Prostate gland (tissue), 2 donors: ENCODE measurements at regions of chr3 and their contacts with region 1.

Region 1: GRCh38 chr3:178436773-178437172 is 99.5 kb upstream of the KCNMB2 start:
- DNase-seq: no peak
- H3K4me3 ChIP-seq: no peak overlapping the region
- H3K27ac ChIP-seq: no peak overlapping the region
- H3K4me1 ChIP-seq: no peaks in the 10 kb centered on the region
- H3K27me3 ChIP-seq: no peaks in the 10 kb centered on the region
- CTCF ChIP-seq: peak; percentile 26 to 59 (median 50)
- POLR2A ChIP-seq: no peak

Region 2: GRCh38 chr3:178060407-178060806 is 376.4 kb before region 1 on chr3:
- intact Hi-C with region 1: no loop called
- DNase-seq: no peak
- H3K4me3 ChIP-seq: no peak overlapping the region
- H3K27ac ChIP-seq: peak overlapping the region; percentile 12 to 18
- H3K4me1 ChIP-seq: no peaks in the 10 kb centered on the region
- H3K27me3 ChIP-seq: no peaks in the 10 kb centered on the region
- CTCF ChIP-seq: no peak
- POLR2A ChIP-seq: no peak

Region 3: DNA sequence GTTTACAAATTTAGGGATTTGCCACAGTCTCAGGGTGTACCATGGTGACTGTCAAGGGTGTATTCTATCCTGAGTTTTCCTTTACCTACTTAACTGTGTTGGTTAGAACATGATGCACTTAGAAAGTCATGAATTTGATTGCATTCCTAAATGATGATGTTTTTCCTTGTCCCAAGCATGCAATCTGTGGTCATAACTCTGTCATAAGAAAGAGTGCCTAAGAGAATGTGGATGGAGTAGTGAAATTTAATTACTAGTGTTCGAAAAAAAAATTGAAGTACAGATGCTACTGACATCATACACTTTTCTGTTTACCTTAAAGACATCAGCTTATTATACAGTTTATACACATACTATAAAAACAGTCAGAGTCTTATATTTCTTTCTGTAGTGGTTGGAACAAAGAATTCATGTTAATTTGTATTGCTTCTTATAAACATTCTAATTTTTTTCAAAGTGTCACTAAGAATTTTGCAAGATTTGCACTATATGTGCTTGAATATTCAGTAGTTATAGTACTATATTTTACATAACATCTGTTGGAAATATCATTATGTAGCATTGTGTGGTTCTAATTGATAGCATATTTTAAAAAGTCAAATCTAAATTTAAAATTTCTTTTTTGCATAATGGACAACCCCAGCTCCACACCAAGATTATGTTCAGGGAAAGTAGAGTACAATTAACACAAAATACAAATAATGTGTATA is 131.9 kb before region 1 on chr3:
- intact Hi-C with region 1: no loop called
- DNase-seq: no peak
- H3K4me3 ChIP-seq: no peak overlapping the region
- H3K27ac ChIP-seq: no peak overlapping the region
- H3K4me1 ChIP-seq: no peaks in the 10 kb centered on the region
- H3K27me3 ChIP-seq: no peaks in the 10 kb centered on the region
- CTCF ChIP-seq: no peak
- POLR2A ChIP-seq: no peak

Region 4: DNA sequence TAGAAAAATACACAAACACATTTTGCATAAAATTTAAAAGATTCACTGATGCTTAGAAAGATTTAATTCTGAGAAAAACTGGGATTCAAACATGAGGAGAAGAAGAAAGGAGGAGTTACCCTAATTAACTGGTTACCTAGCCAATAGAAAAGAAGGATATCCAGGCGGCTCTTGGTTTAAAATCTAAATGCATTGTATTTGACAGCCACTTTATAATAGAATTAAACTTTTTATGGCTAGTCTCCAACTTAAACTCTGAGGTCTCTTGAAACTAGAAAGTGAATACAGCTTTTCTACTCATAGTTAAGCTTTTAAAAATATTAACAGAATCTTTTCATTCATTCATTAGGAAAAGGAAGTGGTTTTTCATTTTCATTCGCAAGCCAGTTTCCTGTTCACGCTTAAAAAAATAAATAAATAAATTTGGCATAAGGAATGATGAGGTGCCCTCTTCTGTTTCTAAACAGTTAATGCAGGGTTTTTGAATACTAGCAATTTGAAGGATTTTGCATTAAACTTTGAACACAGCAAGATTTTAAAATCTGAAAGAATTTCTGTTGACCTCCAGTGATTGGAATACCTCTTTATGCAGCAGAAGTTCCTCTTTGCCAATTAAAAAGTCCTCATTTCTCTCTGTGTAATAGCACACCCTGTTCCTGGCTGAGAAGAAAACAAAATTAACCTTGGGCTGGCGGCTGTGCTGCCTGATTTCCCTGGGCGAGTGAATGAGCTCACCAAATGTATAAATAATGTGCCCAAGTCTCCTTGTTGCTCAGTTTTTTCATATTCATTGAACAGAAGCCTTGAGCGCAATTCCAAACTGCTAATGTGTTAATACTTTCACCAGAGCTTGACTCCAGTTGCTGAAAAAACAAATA is 529.8 kb after region 1 on chr3:
- intact Hi-C with region 1: loop called (anchors 5 kb)
- DNase-seq: no peak
- H3K4me3 ChIP-seq: no peak overlapping the region
- H3K27ac ChIP-seq: no peak overlapping the region
- H3K4me1 ChIP-seq: no peaks in the 10 kb centered on the region
- H3K27me3 ChIP-seq: no peaks in the 10 kb centered on the region
- CTCF ChIP-seq: peak in 3 of 4 experiments; percentile 28 to 63 (median 59)
- POLR2A ChIP-seq: no peak